ENCODE measurements at regions of chr3 and their contacts with region 1.

Region 1: DNA sequence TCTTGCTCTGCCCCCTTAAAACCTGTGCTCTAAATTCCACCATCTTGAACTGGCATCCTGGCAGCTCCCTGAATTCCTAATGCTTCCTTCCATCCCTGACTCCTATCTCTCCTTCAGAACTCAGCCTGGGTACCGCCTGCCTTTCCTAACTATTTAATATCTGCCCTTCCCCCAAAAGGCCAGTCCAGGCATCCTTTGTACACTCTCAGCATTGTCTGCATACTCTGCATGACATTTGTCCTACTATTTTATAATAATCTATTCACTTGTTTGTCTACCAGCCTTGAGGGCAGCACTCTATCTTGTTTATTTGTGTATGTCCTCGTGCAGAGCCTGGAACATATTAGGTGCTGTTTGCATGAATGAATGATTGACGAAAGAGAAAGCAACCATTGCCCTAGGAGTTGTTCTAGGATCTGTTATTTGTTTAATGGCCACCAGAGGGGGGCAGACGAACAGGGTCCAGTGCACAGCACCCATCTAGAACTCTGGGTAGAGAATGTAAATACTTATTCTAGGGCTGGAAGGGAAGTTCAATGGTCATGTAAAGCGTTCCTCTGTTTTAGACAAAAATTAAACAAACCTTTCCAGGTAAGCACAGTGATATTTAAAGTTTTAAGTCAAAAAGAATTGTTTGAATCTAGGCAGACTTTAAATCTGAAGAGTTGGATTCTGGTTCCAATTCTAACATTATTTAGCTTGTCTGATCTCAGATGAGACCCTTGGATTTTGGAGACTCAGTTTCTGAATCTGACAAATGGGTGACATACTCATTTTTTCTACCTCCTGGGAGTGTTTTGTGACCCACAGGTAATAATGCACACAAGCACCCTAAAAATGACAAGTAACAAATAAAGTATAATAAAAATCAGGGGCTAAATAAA is 125.8 kb upstream of the GALNT15 start:
- DNase-seq: peak; percentile 80 to 85
- ATAC-seq: peak; percentile 98 to 99
- H3K4me3 ChIP-seq: no peak overlapping the region
- H3K27ac ChIP-seq: peak overlapping the region; percentile 46 to 62
- H3K4me1 ChIP-seq: peaks cover 12% of the 10 kb centered on the region; the same call in 2 of the 3 replicates
- CTCF ChIP-seq: peak; percentile 96
- EP300 ChIP-seq: no peak
- POLR2A ChIP-seq: no peak
- RAD21 ChIP-seq: peak; percentile 99 to 100

Region 2: GRCh38 chr3:16011376-16011775 is 37.3 kb before region 1 on chr3:
- CTCF ChIA-PET with region 1: no interaction called
- POLR2A ChIA-PET with region 1: no interaction called
- DNase-seq: no peak
- ATAC-seq: no peak
- H3K4me3 ChIP-seq: no peak overlapping the region
- H3K27ac ChIP-seq: no peak overlapping the region
- H3K4me1 ChIP-seq: no peaks in the 10 kb centered on the region
- CTCF ChIP-seq: no peak
- EP300 ChIP-seq: no peak
- POLR2A ChIP-seq: no peak
- RAD21 ChIP-seq: no peak

Region 3: DNA sequence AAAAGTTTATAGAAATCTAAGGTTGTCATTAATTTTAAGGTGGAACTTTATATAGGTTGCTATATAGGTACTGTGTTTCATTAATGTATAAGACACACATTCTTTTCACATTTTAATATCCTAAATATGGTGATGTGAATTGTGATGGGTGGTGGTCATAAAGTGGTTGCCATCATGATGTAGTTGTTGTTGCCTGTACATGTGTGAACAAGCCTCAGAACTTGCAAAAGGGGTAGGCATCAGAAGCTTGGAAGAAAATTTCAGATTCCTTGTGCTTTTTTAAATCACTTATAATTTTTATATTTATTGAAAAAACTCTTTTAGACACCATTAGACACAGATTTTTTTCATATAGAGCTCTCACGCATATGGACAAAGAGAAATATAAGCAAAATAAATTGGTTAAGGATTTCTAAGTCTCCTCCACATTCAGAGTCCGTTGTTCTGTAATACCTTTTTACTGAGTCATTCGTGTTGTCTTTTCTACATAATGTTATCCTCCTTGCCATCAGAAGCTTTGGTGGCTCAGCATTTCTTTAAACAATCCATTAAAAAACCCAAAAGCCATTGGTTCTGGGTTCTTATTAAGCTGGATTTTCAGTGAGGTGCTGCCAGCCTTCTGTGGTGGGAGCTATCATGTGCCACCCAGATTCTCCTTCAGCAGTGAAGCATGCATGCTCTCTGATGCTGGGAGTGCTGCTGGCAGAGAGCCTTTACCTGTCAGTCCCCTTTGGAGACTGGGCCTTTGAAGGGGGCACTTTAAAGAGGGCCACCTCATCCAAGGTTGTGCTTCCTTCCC is 14.6 kb before region 1 on chr3:
- CTCF ChIA-PET with region 1: interaction called, 32 read pairs
- POLR2A ChIA-PET with region 1: no interaction called
- DNase-seq: no peak
- ATAC-seq: no peak
- H3K4me3 ChIP-seq: no peak overlapping the region
- H3K27ac ChIP-seq: no peak overlapping the region
- H3K4me1 ChIP-seq: peaks cover 6% of the 10 kb centered on the region; the same call in 1 of the 3 replicates
- CTCF ChIP-seq: no peak
- EP300 ChIP-seq: no peak
- POLR2A ChIP-seq: no peak
- RAD21 ChIP-seq: no peak

Region 4: GRCh38 chr3:16090024-16090423 is 41.3 kb after region 1 on chr3:
- CTCF ChIA-PET with region 1: interaction called, 19 read pairs
- POLR2A ChIA-PET with region 1: no interaction called
- DNase-seq: peak; percentile 33 to 48
- ATAC-seq: peak; percentile 51 to 79; a peak in 5 of 6 replicates
- H3K4me3 ChIP-seq: no peak overlapping the region
- H3K27ac ChIP-seq: peak overlapping the region; percentile 38 to 49; a peak in 4 of 6 replicates
- H3K4me1 ChIP-seq: peaks cover 18% of the 10 kb centered on the region
- CTCF ChIP-seq: no peak
- EP300 ChIP-seq: no peak
- POLR2A ChIP-seq: no peak
- RAD21 ChIP-seq: no peak

Region 5: GRCh38 chr3:16140116-16140893 is 91.6 kb after region 1 on chr3:
- CTCF ChIA-PET with region 1: interaction called, 16 read pairs
- POLR2A ChIA-PET with region 1: no interaction called
- DNase-seq: no peak
- ATAC-seq: no peak
- H3K4me3 ChIP-seq: no peak overlapping the region
- H3K27ac ChIP-seq: peak overlapping the region; percentile 15 to 53; a peak in 4 of 6 replicates
- H3K4me1 ChIP-seq: peaks cover 32% of the 10 kb centered on the region
- CTCF ChIP-seq: no peak
- EP300 ChIP-seq: no peak
- POLR2A ChIP-seq: no peak
- RAD21 ChIP-seq: no peak

Region 6: GRCh38 chr3:16177962-16178627 is 129.4 kb after region 1 on chr3:
- CTCF ChIA-PET with region 1: interaction called, 373 read pairs
- POLR2A ChIA-PET with region 1: no interaction called
- DNase-seq: peak; percentile 72 to 83
- ATAC-seq: peak; percentile 85 to 95
- H3K4me3 ChIP-seq: no peak overlapping the region
- H3K27ac ChIP-seq: peak overlapping the region; percentile 72 to 75
- H3K4me1 ChIP-seq: peaks cover 17% of the 10 kb centered on the region; the same call in 2 of the 3 replicates
- CTCF ChIP-seq: peak; percentile 95
- EP300 ChIP-seq: no peak
- POLR2A ChIP-seq: no peak
- RAD21 ChIP-seq: peak; percentile 98 to 99

Region 7: DNA sequence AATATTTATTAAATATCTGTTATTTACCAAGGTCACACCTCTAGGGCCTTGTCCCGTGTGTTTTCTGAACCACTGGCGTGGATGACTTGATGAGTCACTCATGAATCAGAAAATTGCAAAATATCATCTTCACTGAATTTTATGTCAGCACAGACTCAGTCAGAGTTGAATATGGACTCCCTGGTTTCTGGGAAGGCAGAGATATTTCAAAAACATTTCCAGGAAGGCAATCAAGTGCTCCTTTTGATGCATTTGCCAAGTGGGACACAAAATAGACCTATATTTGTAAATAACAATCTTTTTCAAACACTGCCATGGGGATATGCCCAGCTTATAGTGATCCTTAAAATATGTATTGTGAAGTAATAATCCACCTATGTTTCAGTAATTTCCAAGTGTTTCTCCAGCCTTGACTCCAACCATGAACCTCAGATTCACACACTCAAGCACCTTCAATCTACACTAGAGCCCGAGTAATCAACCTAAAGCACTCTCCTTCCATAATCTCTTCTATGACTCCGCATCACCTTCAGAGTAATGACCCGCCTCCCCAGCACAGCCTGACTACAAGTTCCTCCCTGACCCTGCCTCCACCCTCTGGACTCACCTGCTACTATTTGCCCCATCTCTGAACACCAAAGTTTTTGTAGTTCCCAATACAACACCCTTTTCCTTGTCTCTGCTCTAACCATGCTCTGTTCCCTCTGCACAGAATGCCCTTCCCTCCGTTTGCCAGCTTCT is 191.8 kb after region 1 on chr3:
- CTCF ChIA-PET with region 1: interaction called, 43 read pairs
- POLR2A ChIA-PET with region 1: no interaction called
- DNase-seq: peak; percentile 38 to 71
- ATAC-seq: peak; percentile 72 to 80
- H3K4me3 ChIP-seq: no peak overlapping the region
- H3K27ac ChIP-seq: peak overlapping the region; percentile 53 to 63; a peak in 5 of 6 replicates
- H3K4me1 ChIP-seq: peaks cover 22% of the 10 kb centered on the region
- CTCF ChIP-seq: no peak
- EP300 ChIP-seq: no peak
- POLR2A ChIP-seq: no peak
- RAD21 ChIP-seq: no peak

Region 8: DNA sequence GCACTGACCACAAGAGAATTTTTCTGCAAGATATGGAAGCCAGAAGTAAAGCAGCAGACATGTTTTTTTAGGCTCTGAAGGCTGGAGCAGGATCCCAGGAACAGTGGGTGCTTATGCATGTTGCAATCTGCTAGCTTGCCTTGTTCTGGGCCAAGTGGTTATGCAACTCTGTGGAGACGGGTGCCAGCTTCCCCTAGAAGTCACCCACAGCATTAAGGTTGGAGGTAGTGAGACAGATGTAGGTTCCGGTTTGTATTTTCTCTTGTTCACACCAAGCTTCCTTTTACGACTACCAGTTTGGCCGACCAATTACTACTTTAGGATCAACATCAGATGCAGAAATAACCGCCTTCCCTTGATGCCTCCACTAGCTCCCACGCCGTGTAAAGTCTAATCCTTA is 204.9 kb after region 1 on chr3:
- CTCF ChIA-PET with region 1: interaction called, 36 read pairs
- POLR2A ChIA-PET with region 1: no interaction called
- DNase-seq: no peak
- ATAC-seq: no peak
- H3K4me3 ChIP-seq: no peak overlapping the region
- H3K27ac ChIP-seq: no peak overlapping the region
- H3K4me1 ChIP-seq: no peaks in the 10 kb centered on the region
- CTCF ChIP-seq: no peak
- EP300 ChIP-seq: no peak
- POLR2A ChIP-seq: no peak
- RAD21 ChIP-seq: no peak

Region 9: GRCh38 chr3:16993227-16993626 is 944.5 kb after region 1 on chr3:
- CTCF ChIA-PET with region 1: no interaction called
- POLR2A ChIA-PET with region 1: no interaction called
- DNase-seq: peak in 1 of 2 experiments; percentile 15
- ATAC-seq: no peak
- H3K4me3 ChIP-seq: no peak overlapping the region
- H3K27ac ChIP-seq: no peak overlapping the region
- H3K4me1 ChIP-seq: peaks cover 28% of the 10 kb centered on the region
- CTCF ChIP-seq: no peak
- EP300 ChIP-seq: no peak
- POLR2A ChIP-seq: no peak
- RAD21 ChIP-seq: no peak